Gastrocnemius medialis (tissue), 4 donors: ENCODE measurements at regions of chr17 and their contacts with region 1.

Region 1: GRCh38 chr17:34980681-34981537 is 597 bp downstream of the LIG3 start:
- DNase-seq: peak; percentile 47 to 53
- ATAC-seq: peak; percentile 89 to 93
- H3K4me3 ChIP-seq: peak overlapping the region; percentile 81 to 99 (median 86)
- H3K27ac ChIP-seq: peak overlapping the region; percentile 92 to 98 (median 96)
- H3K4me1 ChIP-seq: peaks cover 16 to 30% of the 10 kb centered on the region in 2 donors
- H3K27me3 ChIP-seq: no peaks in the 10 kb centered on the region
- CTCF ChIP-seq: peak in 1 of 5 experiments; percentile 30
- POLR2A ChIP-seq: no peak

Region 2: DNA sequence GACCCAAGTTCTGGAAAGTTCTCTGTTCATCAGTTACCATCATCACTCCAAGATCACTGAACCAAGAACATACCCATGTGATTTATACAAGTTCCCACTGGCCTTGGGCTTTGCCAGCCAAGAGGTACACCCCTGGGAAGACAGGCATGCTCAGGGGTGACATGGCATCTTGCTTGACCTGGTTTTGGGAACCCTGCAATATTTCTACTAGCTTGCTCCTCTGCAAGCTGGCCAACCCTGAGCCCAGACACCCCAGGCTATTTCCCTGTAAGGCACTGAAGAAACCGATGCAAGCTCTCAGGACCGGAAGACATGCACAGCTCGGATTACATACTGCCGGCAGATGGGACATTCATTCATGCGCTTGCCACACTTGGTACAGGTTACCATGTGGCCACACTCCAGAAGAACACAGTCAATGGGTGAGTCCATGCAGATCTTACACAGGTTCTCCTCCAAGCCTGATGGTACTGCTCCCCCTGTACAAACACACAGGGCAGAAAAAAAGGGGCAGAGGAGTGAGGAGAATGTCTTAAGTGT is 30.8 kb after region 1 on chr17:
- in situ Hi-C with region 1: no loop called
- intact Hi-C with region 1: loop called (anchors 2 kb)
- DNase-seq: peak; percentile 63 to 87
- ATAC-seq: peak; percentile 98 to 99
- H3K4me3 ChIP-seq: no peak overlapping the region
- H3K27ac ChIP-seq: peak overlapping the region; percentile 42 to 66 (median 52)
- H3K4me1 ChIP-seq: peaks cover 12 to 17% of the 10 kb centered on the region in 2 donors
- H3K27me3 ChIP-seq: no peaks in the 10 kb centered on the region
- CTCF ChIP-seq: no peak
- POLR2A ChIP-seq: no peak

Region 3: DNA sequence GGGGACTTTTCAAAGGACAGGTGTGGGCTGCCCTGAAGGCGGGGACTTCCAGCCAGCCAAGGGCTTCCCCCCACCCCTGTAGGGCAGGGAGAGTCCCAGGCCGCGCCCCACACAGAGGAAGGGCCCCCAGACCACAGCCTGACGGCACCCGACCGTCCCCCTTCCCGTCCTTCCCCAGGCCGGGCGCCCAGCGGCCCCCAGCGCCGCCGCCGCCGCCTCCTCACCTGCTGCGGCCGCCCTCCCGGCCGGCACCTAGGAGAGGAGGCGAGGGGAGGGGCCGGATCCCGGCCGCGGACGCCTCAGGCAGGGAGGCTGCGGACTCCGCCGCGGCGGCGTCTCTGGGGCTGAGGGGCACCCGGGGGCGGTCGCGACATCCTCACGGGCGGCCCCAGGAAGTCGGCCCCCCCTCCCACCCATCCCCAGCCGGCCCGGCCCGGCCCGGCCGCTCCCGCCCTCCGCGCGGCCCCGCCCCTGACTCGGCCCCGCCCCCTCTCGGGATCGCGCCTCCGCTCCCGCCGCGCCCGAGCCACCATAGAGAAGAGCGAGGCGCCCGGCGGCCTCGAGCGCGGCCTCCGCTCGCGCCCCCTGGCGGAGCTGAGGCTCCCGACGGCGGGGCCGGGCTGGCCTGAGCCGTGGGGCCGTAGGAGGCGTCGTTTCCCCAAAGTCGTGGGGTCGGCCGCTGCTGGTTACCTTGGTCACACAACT is 108.1 kb after region 1 on chr17:
- in situ Hi-C with region 1: loop called in 1 of 4 experiments (anchors 25 kb)
- intact Hi-C with region 1: loop called (anchors 5 kb)
- DNase-seq: peak; percentile 60 to 79
- ATAC-seq: peak; percentile 88 to 93
- H3K4me3 ChIP-seq: peak overlapping the region; percentile 66 to 100 (median 82)
- H3K27ac ChIP-seq: peak overlapping the region; percentile 56 to 77 (median 74)
- H3K4me1 ChIP-seq: peaks cover 6 to 14% of the 10 kb centered on the region in 2 donors
- H3K27me3 ChIP-seq: no peaks in the 10 kb centered on the region
- CTCF ChIP-seq: peak; percentile 70 to 93 (median 86)
- POLR2A ChIP-seq: peak; percentile 33 to 36

Region 4: DNA sequence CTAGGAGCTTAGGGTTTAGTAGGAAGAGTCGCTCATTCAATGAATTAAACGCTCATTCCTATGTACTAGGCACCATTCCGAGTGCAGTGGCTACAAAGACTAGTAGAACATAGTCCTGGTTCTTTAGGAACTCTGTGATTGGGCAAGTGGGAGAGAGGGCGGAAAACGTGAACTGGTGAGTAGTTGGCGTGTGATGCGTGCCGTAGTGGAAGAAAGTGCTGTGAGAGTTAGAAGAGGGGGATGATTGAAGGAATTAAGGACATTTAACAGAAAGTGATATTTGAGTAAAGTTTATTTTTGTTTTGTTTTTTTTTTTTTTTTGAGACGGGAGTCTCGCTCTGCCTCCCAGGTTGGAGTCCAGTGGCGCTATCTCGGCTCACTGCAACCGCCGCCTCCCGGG is 587.6 kb after region 1 on chr17:
- in situ Hi-C with region 1: loop called in 2 of 4 experiments (anchors 25 kb)
- intact Hi-C with region 1: no loop called
- DNase-seq: no peak
- ATAC-seq: peak; percentile 32 to 43
- H3K4me3 ChIP-seq: peak overlapping the region; percentile 64 to 96 (median 81)
- H3K27ac ChIP-seq: peak overlapping the region; percentile 80 to 88 (median 84)
- H3K4me1 ChIP-seq: peaks cover 22 to 25% of the 10 kb centered on the region in 2 donors
- H3K27me3 ChIP-seq: no peaks in the 10 kb centered on the region
- CTCF ChIP-seq: no peak
- POLR2A ChIP-seq: no peak